CD4-positive, alpha-beta T cell (primary cell): ENCODE measurements at regions of chr17 and their contacts with region 1.

Region 1: GRCh38 chr17:7740481-7741001 is 23.0 kb downstream of the DNAH2 start:
- DNase-seq: no peak
- ATAC-seq: no peak
- H3K4me3 ChIP-seq: no peak overlapping the region
- H3K4me3 Mint-ChIP-seq: no peak overlapping the region
- H3K27ac ChIP-seq: no peak overlapping the region
- H3K27ac Mint-ChIP-seq: no peak overlapping the region
- H3K4me1 ChIP-seq: no peaks in the 10 kb centered on the region
- H3K4me1 Mint-ChIP-seq: no peaks in the 10 kb centered on the region
- H3K27me3 ChIP-seq: peaks cover 6 to 12% of the 10 kb centered on the region in 2 experiments
- H3K27me3 Mint-ChIP-seq: peaks cover 39% of the 10 kb centered on the region
- CTCF ChIP-seq: no peak

Region 2: GRCh38 chr17:7803981-7804380 is 63.4 kb after region 1 on chr17:
- CTCF ChIA-PET with region 1: no interaction called
- POLR2A ChIA-PET with region 1: no interaction called
- intact Hi-C with region 1: no loop called
- DNase-seq: no peak
- ATAC-seq: no peak
- H3K4me3 ChIP-seq: no peak overlapping the region
- H3K4me3 Mint-ChIP-seq: no peak overlapping the region
- H3K27ac ChIP-seq: no peak overlapping the region
- H3K27ac Mint-ChIP-seq: no peak overlapping the region
- H3K4me1 ChIP-seq: no peaks in the 10 kb centered on the region
- H3K4me1 Mint-ChIP-seq: no peaks in the 10 kb centered on the region
- H3K27me3 ChIP-seq: peaks cover 0 to 3% of the 10 kb centered on the region in 2 experiments
- H3K27me3 Mint-ChIP-seq: peaks cover 20% of the 10 kb centered on the region
- CTCF ChIP-seq: no peak

Region 3: GRCh38 chr17:7851438-7852256 is 111.1 kb after region 1 on chr17:
- CTCF ChIA-PET with region 1: interaction called, 5 read pairs
- POLR2A ChIA-PET with region 1: interaction called, 3 read pairs
- intact Hi-C with region 1: loop called in 1 of 2 experiments (anchors 1 kb)
- DNase-seq: peak; percentile 93 to 99 (median 94)
- ATAC-seq: peak; percentile 82
- H3K4me3 ChIP-seq: peak overlapping the region; percentile 54
- H3K4me3 Mint-ChIP-seq: peak overlapping the region; percentile 84
- H3K27ac ChIP-seq: peak overlapping the region; percentile 57 to 59
- H3K27ac Mint-ChIP-seq: peak overlapping the region; percentile 95
- H3K4me1 ChIP-seq: peaks cover 38% of the 10 kb centered on the region
- H3K4me1 Mint-ChIP-seq: peaks cover 14% of the 10 kb centered on the region
- H3K27me3 ChIP-seq: no peaks in the 10 kb centered on the region
- H3K27me3 Mint-ChIP-seq: no peaks in the 10 kb centered on the region
- CTCF ChIP-seq: peak; percentile 97

Region 4: DNA sequence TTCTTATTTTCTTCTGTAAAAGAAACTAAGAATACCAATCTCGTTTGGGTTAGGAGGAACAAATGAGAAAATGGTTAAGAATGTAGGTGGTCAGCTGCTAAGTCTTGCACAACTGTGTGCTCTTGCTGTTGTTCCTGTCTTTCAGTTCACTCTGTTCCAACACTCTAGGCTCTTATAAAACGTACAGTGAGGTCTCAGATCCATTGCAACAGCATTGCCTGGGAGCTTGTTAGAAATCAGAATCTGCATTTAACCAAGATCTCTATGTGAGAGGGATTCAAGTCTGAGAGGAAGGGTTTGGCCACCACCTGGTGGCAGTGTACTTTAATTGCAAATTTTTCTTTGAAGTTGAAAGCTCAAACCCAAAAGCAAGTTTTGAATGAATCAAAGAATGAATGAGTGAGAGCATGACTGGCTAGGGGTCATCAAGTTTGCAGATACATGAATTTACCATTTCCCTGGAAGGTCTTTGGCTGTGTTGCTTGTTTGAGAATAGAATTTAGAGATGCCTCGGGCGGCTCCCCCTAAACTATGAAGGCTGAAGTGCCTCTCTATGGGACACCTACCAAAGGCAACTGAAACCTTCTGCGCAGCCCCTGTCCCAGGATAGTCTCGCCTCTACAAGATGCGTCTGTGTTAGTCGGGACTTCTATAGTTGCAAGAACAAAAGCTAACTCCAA is 300.8 kb after region 1 on chr17:
- CTCF ChIA-PET with region 1: interaction called, 8 read pairs
- POLR2A ChIA-PET with region 1: no interaction called
- intact Hi-C with region 1: loop called (anchors 1 to 2 kb)
- DNase-seq: peak in 8 of 14 experiments; percentile 17 to 72 (median 44)
- ATAC-seq: peak; percentile 37
- H3K4me3 ChIP-seq: no peak overlapping the region
- H3K4me3 Mint-ChIP-seq: no peak overlapping the region
- H3K27ac ChIP-seq: no peak overlapping the region
- H3K27ac Mint-ChIP-seq: no peak overlapping the region
- H3K4me1 ChIP-seq: peaks cover 4% of the 10 kb centered on the region
- H3K4me1 Mint-ChIP-seq: peaks cover 4% of the 10 kb centered on the region
- H3K27me3 ChIP-seq: peaks cover 11 to 21% of the 10 kb centered on the region in 2 experiments
- H3K27me3 Mint-ChIP-seq: peaks cover 40% of the 10 kb centered on the region
- CTCF ChIP-seq: peak; percentile 50

Region 5: GRCh38 chr17:8248751-8249607 is 508.4 kb after region 1 on chr17 and contains the start of gene PFAS:
- CTCF ChIA-PET with region 1: no interaction called
- POLR2A ChIA-PET with region 1: no interaction called
- intact Hi-C with region 1: no loop called
- DNase-seq: peak; percentile 87 to 98 (median 94)
- ATAC-seq: peak; percentile 35
- H3K4me3 ChIP-seq: peak within 1 kb of the TSS; percentile 75
- H3K4me3 Mint-ChIP-seq: peak within 1 kb of the TSS; percentile 98
- H3K27ac ChIP-seq: peak within 1 kb of the TSS; percentile 99 to 100
- H3K27ac Mint-ChIP-seq: peak within 1 kb of the TSS; percentile 100
- H3K4me1 ChIP-seq: peaks cover 53% of the 10 kb centered on the region
- H3K4me1 Mint-ChIP-seq: peaks cover 62% of the 10 kb centered on the region
- H3K27me3 ChIP-seq: no peaks in the 10 kb centered on the region
- H3K27me3 Mint-ChIP-seq: peaks cover 5% of the 10 kb centered on the region
- CTCF ChIP-seq: no peak
- total RNA-seq, gene PFAS: 22.3 to 23.0 TPM